Aorta (tissue), 5 donors: ENCODE measurements at regions of chr4 and their contacts with region 1.

Region 1: GRCh38 chr4:100421361-100421978 is 96.4 kb downstream of the EMCN start:
- DNase-seq: no peak
- ATAC-seq: no peak
- H3K4me3 ChIP-seq: peak overlapping the region in 1 of 2 donors; percentile 48
- H3K27ac ChIP-seq: no peak overlapping the region
- H3K4me1 ChIP-seq: peaks cover 2 to 3% of the 10 kb centered on the region in 2 donors
- H3K27me3 ChIP-seq: no peaks in the 10 kb centered on the region

Region 2: GRCh38 chr4:100539706-100540105 is 118.2 kb after region 1 on chr4:
- intact Hi-C with region 1: no loop called
- DNase-seq: no peak
- ATAC-seq: no peak
- H3K4me3 ChIP-seq: no peak overlapping the region
- H3K27ac ChIP-seq: no peak overlapping the region
- H3K4me1 ChIP-seq: no peaks in the 10 kb centered on the region
- H3K27me3 ChIP-seq: no peaks in the 10 kb centered on the region

Region 3: GRCh38 chr4:100738196-100739170 is 317.0 kb after region 1 on chr4:
- intact Hi-C with region 1: loop called in 1 of 2 experiments (anchors 10 kb)
- DNase-seq: peak in 1 of 2 donors; percentile 57
- ATAC-seq: peak; percentile 81
- H3K4me3 ChIP-seq: no peak overlapping the region
- H3K27ac ChIP-seq: no peak overlapping the region
- H3K4me1 ChIP-seq: peaks cover 0 to 3% of the 10 kb centered on the region in 2 donors
- H3K27me3 ChIP-seq: no peaks in the 10 kb centered on the region